Activated naive CD4-positive, alpha-beta T cell treated with anti-CD3 and anti-CD28 coated beads for 36 hours (primary cell): ENCODE measurements at regions of chr3 and their contacts with region 1.

Region 1: DNA sequence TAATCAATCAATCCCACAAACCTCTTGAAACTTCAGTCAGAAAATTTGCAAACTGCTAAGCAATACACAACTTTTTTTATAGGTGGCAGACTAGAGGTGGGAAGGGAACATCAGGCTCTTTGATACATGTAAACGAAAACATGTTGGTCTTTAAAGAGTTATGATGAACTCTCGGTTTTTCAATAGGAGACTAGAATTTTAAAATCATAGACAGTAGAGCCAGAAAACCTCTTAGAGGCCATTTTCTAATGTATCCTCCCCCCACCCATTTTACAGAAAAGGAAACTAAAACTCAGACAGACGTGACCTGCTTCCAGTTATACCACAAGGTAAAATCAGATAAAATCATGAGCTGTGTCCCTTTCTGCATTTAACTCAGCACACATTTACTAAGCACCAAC is 179.1 kb upstream of the LPP start:
- DNase-seq: no peak
- H3K4me3 Mint-ChIP-seq: peak overlapping the region; percentile 50
- H3K27ac Mint-ChIP-seq: peak overlapping the region; percentile 82
- H3K4me1 Mint-ChIP-seq: peaks cover 50% of the 10 kb centered on the region
- H3K27me3 Mint-ChIP-seq: no peaks in the 10 kb centered on the region

Region 2: DNA sequence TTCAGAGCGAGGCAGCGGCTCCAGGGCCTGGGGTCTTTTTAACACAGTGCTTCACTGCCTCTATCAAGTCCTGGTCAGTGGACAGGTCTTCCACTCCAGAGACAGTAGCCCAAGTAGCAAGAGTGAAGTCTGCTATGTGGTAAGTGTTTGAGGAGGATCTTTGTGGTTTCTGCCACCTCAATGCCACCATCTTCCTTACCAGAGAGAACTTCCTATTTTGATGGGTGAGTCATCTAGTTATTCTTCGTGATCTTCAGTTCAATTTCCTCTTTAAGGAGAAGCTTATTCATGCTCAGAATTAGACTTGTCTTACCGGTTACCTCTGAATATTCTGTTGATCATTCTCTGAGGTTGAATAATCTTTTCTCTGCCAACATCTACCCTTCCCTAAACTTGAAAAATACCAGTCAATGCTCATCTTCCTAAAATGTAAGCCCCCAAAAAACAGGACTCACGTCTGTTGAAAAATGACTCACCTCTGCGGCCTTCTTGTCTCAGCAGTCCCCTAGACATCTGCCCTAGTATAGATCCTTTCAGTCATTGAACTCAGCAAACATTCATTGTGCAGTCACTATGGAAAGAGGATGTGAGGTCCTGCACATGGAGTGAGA is 197.4 kb before region 1 on chr3:
- CTCF ChIA-PET with region 1: no interaction called
- intact Hi-C with region 1: loop called (anchors 1 kb)
- DNase-seq: peak; percentile 76
- H3K4me3 Mint-ChIP-seq: peak overlapping the region; percentile 48
- H3K27ac Mint-ChIP-seq: peak overlapping the region; percentile 96
- H3K4me1 Mint-ChIP-seq: peaks cover 31% of the 10 kb centered on the region
- H3K27me3 Mint-ChIP-seq: no peaks in the 10 kb centered on the region

Region 3: DNA sequence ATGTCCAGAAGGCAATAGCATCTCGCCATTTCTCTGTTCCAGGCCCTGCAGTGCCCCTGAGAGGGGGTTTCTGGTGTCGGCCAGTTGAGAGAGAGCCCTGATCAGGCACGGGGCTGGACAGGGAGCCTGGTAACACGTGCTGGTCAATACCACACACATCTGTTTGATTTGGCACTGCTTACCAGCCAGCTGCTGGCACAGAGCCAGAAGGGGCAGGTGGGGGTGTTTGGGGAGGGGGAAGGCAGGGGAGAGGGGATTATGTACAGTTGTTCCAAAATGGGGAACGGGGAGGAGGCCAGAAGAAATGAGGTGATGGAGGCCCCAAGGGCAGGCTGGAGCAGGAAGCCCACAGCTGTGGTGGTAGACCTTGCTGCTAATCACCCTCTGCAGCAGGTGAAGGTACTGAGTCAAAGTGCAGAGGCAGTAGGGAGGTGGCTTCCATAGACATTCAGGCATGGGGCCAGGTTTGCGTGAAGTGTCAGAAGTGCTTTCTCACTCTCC is 25.5 kb after region 1 on chr3:
- CTCF ChIA-PET with region 1: interaction called, 3 read pairs
- intact Hi-C with region 1: loop called (anchors 1 kb)
- DNase-seq: peak; percentile 23
- H3K4me3 Mint-ChIP-seq: peak overlapping the region; percentile 14
- H3K27ac Mint-ChIP-seq: peak overlapping the region; percentile 71
- H3K4me1 Mint-ChIP-seq: peaks cover 24% of the 10 kb centered on the region
- H3K27me3 Mint-ChIP-seq: no peaks in the 10 kb centered on the region

Region 4: DNA sequence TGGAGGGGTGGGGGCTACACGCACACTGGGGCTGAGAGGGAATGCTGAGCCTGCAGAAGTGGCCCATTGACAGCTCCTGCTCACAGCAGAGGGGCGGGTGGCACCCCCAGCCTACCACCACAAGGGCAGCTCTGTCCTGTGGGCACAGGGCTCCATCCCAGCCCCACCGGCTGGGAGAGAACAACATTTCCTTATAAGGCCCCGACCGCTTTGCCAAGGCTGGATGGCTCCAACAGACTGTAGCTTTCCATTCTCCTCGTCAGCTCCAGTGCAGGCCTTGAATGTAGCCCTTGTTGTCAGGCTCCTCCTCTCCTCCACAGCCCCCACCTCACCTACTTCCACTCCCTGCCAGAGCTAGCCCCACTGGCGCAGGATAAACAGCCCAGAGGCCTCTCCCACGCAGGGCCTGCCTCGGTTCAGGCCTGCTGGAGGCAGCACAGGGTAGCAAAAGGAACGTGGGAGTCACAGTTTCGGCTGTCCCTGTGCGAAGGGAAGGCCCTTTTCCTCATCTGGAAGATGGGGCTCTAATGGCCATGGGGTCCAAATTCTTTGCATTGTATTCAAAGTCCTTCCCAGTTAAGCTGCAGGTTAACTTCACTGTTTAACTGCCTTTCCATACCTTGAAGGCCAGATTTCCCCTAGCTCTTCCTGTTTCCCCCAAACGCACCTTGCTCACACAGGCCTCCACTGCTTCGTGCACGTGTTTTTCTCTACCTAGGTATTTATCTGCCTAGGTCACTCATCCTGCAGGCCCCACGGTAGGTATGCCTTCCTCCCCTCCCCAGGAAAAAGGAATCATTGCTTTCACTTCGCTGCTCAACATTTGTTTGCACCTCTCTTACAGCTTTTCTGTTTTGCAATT is 77.5 kb after region 1 on chr3:
- CTCF ChIA-PET with region 1: no interaction called
- intact Hi-C with region 1: no loop called
- DNase-seq: no peak
- H3K4me3 Mint-ChIP-seq: no peak overlapping the region
- H3K27ac Mint-ChIP-seq: no peak overlapping the region
- H3K4me1 Mint-ChIP-seq: peaks cover 21% of the 10 kb centered on the region
- H3K27me3 Mint-ChIP-seq: peaks cover 3% of the 10 kb centered on the region

Region 5: DNA sequence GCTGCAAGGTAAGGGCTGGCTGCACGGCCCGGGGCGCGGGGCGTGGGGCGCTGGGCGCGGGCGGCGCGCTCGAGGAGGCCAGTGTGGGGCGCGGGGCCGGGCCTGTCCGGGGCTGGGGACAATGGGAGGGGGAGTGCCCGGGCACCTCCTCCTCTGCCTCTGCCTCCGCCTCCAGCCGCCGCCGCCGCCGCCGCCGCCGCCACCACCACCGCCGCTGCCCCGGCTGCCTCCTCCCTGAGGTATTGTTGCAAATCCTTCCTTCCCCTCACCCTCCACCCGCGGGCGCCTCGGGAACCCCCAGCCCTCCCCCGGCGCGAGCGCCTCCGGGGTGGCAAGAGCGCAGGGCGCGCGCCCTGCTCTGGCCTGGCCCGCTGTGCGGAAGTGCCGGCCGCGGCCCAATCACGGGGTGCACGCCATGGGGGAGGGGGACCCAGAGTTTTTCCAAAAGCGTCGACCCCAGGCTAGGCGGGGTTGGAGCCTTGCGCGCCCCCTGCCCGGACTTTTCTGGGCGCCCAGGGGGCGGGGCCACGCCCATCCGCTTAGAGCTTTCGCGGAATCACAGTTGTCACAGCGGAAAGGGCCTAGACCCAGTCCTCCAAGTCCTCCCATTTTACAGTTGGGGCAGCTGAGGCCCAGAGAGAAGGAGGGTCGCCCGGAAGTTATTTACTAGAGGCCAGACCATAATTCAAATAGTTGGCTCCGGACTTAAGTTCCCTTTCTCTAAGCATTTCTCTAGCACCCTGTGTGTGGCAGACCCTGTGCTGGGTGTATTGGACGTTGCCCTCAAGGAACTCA is 179.3 kb after region 1 on chr3 and contains the start of gene LPP:
- CTCF ChIA-PET with region 1: no interaction called
- intact Hi-C with region 1: loop called (anchors 10 kb)
- DNase-seq: peak; percentile 88
- H3K4me3 Mint-ChIP-seq: peak within 1 kb of the TSS; percentile 83
- H3K27ac Mint-ChIP-seq: peak within 1 kb of the TSS; percentile 89
- H3K4me1 Mint-ChIP-seq: peaks cover 54% of the 10 kb centered on the region
- H3K27me3 Mint-ChIP-seq: no peaks in the 10 kb centered on the region
- total RNA-seq, gene LPP: 27.5 to 31.8 TPM

Region 6: GRCh38 chr3:188320757-188321156 is 345.9 kb after region 1 on chr3:
- CTCF ChIA-PET with region 1: no interaction called
- intact Hi-C with region 1: loop called (anchors 1 kb)
- DNase-seq: no peak
- H3K4me3 Mint-ChIP-seq: no peak overlapping the region
- H3K27ac Mint-ChIP-seq: no peak overlapping the region
- H3K4me1 Mint-ChIP-seq: peaks cover 49% of the 10 kb centered on the region
- H3K27me3 Mint-ChIP-seq: no peaks in the 10 kb centered on the region

Region 7: DNA sequence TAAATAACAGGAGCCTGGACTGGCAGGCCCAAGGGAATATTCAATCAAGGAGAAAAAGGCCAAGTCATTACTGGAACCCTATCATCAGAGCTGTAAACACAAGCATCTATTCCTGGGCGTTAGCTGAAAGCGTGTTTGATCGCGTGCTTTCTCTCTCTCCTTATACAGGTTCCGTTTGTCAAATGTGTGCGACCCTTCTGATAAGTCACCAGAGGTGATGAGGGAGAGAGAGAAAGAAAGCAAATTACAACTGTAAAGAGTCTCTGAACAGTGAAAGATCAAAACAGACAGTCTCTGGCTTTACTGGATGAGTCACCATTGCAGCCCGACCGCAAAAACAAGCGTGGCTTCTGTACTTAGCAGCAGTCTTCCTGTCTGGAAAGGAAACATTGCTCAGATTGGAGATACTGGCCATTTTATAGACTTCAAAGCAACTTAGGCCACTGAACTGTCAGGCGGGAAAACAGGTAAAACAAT is 1157.4 kb after region 1 on chr3:
- CTCF ChIA-PET with region 1: no interaction called
- intact Hi-C with region 1: loop called (anchors 5 kb)
- DNase-seq: peak; percentile 91
- H3K4me3 Mint-ChIP-seq: peak overlapping the region; percentile 41
- H3K27ac Mint-ChIP-seq: peak overlapping the region; percentile 76
- H3K4me1 Mint-ChIP-seq: peaks cover 21% of the 10 kb centered on the region
- H3K27me3 Mint-ChIP-seq: no peaks in the 10 kb centered on the region